ENCODE measurements at regions of chr19 and their contacts with region 1.

Region 1: DNA sequence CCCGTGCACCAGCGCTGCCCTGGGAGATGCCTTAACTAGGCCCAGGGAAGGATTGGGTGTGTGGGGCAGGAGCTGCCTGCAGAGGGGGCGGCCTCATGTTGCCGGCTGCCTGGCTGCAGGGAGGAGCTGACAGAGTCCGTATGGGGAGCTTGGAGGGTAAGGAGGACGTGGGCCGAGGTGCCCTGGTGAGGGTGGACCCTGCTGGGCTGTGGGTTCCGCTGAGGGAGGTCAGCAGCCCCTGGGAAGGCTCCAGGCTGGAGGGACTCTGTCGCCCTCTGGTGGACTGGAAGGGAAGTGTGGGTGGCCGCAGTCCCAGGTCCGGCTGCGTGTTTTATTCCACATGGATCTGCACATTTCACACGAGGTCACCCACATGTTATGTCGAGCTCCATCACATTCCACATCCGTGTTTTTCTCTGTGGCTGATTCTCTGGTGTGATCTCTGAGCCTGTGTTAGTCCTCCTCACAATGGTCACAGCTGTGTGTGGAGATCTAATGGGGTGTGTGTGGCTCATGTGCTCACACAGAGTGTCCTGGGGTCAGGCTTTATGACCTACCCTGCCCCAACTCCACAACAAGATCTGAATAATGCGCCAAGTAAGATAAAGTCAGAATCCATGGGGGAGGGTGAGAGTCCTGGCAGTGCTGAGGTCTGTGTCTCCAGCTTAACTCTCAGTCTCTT is 1.8 kb upstream of the CEACAM8 start:
- DNase-seq: peak in 6 of 10 donors; percentile 17 to 53 (median 39)
- H3K4me3 ChIP-seq: no peak overlapping the region
- H3K27ac ChIP-seq: no peak overlapping the region
- H3K27me3 ChIP-seq: peaks cover 0 to 2% (median 0%) of the 10 kb centered on the region in 45 donors
- CTCF ChIP-seq: peak; percentile 39 to 94 (median 88)

Region 2: DNA sequence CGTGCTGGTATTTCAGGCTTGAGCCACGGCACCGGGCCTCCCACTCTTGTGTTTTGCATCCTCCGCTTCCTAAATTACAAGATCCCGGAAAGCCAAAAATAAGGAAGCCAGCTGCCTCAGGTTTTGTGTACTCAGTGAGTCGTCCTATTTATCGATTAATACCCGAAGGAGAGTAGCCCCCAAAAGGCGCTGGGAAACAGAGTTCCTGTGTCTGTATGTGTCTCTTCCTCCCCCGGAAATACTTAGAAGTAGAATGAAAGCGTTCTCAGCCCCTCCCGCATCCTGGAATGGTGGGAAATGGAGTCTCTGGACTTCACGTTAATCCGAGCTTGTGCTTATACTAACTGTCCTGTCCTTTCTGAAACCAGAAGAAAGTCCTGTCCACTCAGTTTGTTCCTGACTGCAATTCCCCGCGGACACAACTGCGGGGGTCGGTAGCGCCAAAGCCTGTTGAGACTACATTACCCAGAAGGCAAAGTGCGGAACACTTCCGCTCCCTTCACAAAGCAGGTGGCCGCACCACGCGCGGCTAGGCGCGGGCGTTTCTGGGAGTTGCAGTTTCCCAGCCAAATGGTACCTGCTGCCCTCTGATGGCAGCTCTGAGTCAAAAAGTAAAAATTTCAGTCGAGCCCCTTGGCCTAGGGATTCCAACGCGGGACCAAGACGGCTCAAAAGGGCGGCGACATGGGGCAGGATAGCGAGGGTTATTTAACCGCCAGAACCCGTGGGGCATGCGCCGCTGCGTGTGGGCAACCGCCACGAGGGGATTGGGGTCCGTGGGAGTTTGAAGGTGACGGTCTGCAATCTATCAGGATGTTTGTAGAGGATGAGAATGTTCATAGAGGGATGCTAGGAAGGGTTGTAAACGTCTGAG is 351.9 kb before region 1 on chr19:
- intact Hi-C with region 1: no loop called
- DNase-seq: peak; percentile 89 to 96 (median 92)
- H3K4me3 ChIP-seq: peak overlapping the region; percentile 49 to 98 (median 88)
- H3K27ac ChIP-seq: peak overlapping the region; percentile 72 to 100 (median 97)
- H3K27me3 ChIP-seq: no peaks in the 10 kb centered on the region
- CTCF ChIP-seq: peak; percentile 64 to 95 (median 88)

Region 3: GRCh38 chr19:42450314-42450934 is 146.1 kb before region 1 on chr19:
- intact Hi-C with region 1: loop called in 1 of 2 experiments (anchors 5 kb)
- DNase-seq: peak; percentile 37 to 81 (median 72)
- H3K4me3 ChIP-seq: no peak overlapping the region
- H3K27ac ChIP-seq: no peak overlapping the region
- H3K27me3 ChIP-seq: no peaks in the 10 kb centered on the region
- CTCF ChIP-seq: peak; percentile 76 to 98 (median 92)

Region 4: GRCh38 chr19:42567561-42567960 is 29.0 kb before region 1 on chr19:
- intact Hi-C with region 1: loop called in 1 of 2 experiments (anchors 2 kb)
- DNase-seq: no peak
- H3K4me3 ChIP-seq: no peak overlapping the region
- H3K27ac ChIP-seq: no peak overlapping the region
- H3K27me3 ChIP-seq: no peaks in the 10 kb centered on the region
- CTCF ChIP-seq: no peak

Region 5: GRCh38 chr19:42584466-42584865 is 12.1 kb before region 1 on chr19:
- intact Hi-C with region 1: no loop called
- DNase-seq: no peak
- H3K4me3 ChIP-seq: no peak overlapping the region
- H3K27ac ChIP-seq: no peak overlapping the region
- H3K27me3 ChIP-seq: no peaks in the 10 kb centered on the region
- CTCF ChIP-seq: no peak

Measured in dorsolateral prefrontal cortex (tissue), 120 donors.